CD4-positive, alpha-beta T cell (primary cell): ENCODE measurements at regions of chr7 and their contacts with region 1.

Region 1: DNA sequence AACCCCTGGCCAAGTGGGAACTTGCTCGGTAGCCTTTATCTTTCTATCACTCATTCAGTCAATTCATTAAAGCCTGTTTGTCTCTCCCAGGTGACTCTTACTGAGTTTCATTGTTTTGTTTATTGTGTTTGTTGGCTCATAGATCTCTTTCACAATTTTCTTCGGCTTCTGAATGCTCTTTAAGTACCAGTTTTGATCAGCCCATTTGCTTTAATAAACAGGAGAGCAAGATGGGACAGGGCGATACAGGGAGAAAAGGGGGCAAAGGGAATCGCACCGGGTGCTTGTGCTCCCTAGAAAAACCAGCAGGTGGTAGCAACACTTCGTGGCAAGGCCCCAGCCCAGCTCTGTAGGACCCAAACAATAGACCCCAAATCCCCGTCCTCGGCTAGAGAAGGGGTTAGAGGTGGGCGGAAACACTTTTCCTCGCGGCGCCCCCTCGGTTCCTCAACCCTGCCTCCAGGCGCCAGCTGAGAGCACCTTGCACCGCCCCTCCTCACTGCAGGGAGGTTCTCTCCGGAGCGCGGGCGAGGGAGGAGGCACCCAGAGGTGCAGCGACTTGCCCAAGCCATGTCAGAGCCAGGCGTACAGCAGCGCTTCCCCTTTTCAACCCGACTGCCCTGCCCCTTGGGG is 1.0 kb upstream of the EPHB6 start:
- DNase-seq: peak; percentile 44 to 83 (median 60)
- ATAC-seq: peak; percentile 82
- H3K4me3 ChIP-seq: peak overlapping the region; percentile 87
- H3K4me3 Mint-ChIP-seq: peak overlapping the region; percentile 95
- H3K27ac ChIP-seq: peak overlapping the region; percentile 24 to 41
- H3K27ac Mint-ChIP-seq: peak overlapping the region; percentile 85
- H3K4me1 ChIP-seq: peaks cover 30% of the 10 kb centered on the region
- H3K4me1 Mint-ChIP-seq: peaks cover 52% of the 10 kb centered on the region
- H3K27me3 ChIP-seq: no peaks in the 10 kb centered on the region
- H3K27me3 Mint-ChIP-seq: no peaks in the 10 kb centered on the region
- CTCF ChIP-seq: peak; percentile 90

Region 2: GRCh38 chr7:142168745-142169144 is 685.1 kb before region 1 on chr7:
- CTCF ChIA-PET with region 1: no interaction called
- POLR2A ChIA-PET with region 1: no interaction called
- intact Hi-C with region 1: no loop called
- DNase-seq: no peak
- ATAC-seq: no peak
- H3K4me3 ChIP-seq: no peak overlapping the region
- H3K4me3 Mint-ChIP-seq: no peak overlapping the region
- H3K27ac ChIP-seq: no peak overlapping the region
- H3K27ac Mint-ChIP-seq: no peak overlapping the region
- H3K4me1 ChIP-seq: no peaks in the 10 kb centered on the region
- H3K4me1 Mint-ChIP-seq: no peaks in the 10 kb centered on the region
- H3K27me3 ChIP-seq: no peaks in the 10 kb centered on the region
- H3K27me3 Mint-ChIP-seq: peaks cover 10% of the 10 kb centered on the region
- CTCF ChIP-seq: no peak

Region 3: GRCh38 chr7:142866361-142867058 is 12.7 kb after region 1 on chr7:
- CTCF ChIA-PET with region 1: interaction called, 7 read pairs
- POLR2A ChIA-PET with region 1: interaction called, 5 read pairs
- intact Hi-C with region 1: loop called in 1 of 2 experiments (anchors 2 kb)
- DNase-seq: peak in 4 of 14 experiments; percentile 26 to 47 (median 40)
- ATAC-seq: peak; percentile 11
- H3K4me3 ChIP-seq: no peak overlapping the region
- H3K4me3 Mint-ChIP-seq: no peak overlapping the region
- H3K27ac ChIP-seq: no peak overlapping the region
- H3K27ac Mint-ChIP-seq: no peak overlapping the region
- H3K4me1 ChIP-seq: peaks cover 9% of the 10 kb centered on the region
- H3K4me1 Mint-ChIP-seq: peaks cover 6% of the 10 kb centered on the region
- H3K27me3 ChIP-seq: no peaks in the 10 kb centered on the region
- H3K27me3 Mint-ChIP-seq: no peaks in the 10 kb centered on the region
- CTCF ChIP-seq: peak; percentile 61

Region 4: GRCh38 chr7:143000648-143001047 is 146.8 kb after region 1 on chr7:
- CTCF ChIA-PET with region 1: interaction called, 4 read pairs
- POLR2A ChIA-PET with region 1: no interaction called
- intact Hi-C with region 1: loop called (anchors 1 to 2 kb)
- DNase-seq: no peak
- ATAC-seq: no peak
- H3K4me3 ChIP-seq: no peak overlapping the region
- H3K4me3 Mint-ChIP-seq: no peak overlapping the region
- H3K27ac ChIP-seq: no peak overlapping the region
- H3K27ac Mint-ChIP-seq: no peak overlapping the region
- H3K4me1 ChIP-seq: peaks cover 6% of the 10 kb centered on the region
- H3K4me1 Mint-ChIP-seq: peaks cover 5% of the 10 kb centered on the region
- H3K27me3 ChIP-seq: no peaks in the 10 kb centered on the region
- H3K27me3 Mint-ChIP-seq: no peaks in the 10 kb centered on the region
- CTCF ChIP-seq: no peak

Region 5: DNA sequence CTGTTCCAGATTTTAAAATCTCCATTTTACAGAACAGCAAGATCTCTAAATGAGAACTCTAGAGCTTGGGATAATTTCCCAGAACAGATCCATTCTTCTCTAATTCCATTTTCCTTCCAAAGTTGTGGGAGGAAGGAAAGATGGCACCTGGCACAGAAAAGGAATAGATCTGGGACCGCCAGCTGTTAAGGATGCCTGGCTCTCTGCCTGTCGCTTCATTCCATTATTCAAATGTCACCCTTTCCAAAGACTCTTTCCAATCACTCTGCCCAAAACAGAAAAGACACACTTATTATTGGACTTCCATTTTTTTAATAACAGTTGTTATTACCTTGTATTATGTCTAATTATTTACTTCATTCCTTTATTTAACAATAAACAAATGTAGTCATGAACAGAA is 173.8 kb after region 1 on chr7:
- CTCF ChIA-PET with region 1: no interaction called
- POLR2A ChIA-PET with region 1: no interaction called
- intact Hi-C with region 1: no loop called
- DNase-seq: no peak
- ATAC-seq: no peak
- H3K4me3 ChIP-seq: no peak overlapping the region
- H3K4me3 Mint-ChIP-seq: no peak overlapping the region
- H3K27ac ChIP-seq: no peak overlapping the region
- H3K27ac Mint-ChIP-seq: no peak overlapping the region
- H3K4me1 ChIP-seq: no peaks in the 10 kb centered on the region
- H3K4me1 Mint-ChIP-seq: no peaks in the 10 kb centered on the region
- H3K27me3 ChIP-seq: peaks cover 6 to 14% of the 10 kb centered on the region in 2 experiments
- H3K27me3 Mint-ChIP-seq: peaks cover 38% of the 10 kb centered on the region
- CTCF ChIP-seq: no peak